Heart right ventricle (tissue), 16 donors: ENCODE measurements at regions of chr21 and their contacts with region 1.

Region 1: GRCh38 chr21:24153137-24153536 is 1454.1 kb downstream of the MRPL39 start:
- DNase-seq: no peak
- ATAC-seq: no peak
- H3K4me3 ChIP-seq: no peak overlapping the region
- H3K27ac ChIP-seq: no peak overlapping the region
- H3K4me1 ChIP-seq: no peaks in the 10 kb centered on the region
- H3K27me3 ChIP-seq: no peaks in the 10 kb centered on the region
- CTCF ChIP-seq: no peak

Region 2: DNA sequence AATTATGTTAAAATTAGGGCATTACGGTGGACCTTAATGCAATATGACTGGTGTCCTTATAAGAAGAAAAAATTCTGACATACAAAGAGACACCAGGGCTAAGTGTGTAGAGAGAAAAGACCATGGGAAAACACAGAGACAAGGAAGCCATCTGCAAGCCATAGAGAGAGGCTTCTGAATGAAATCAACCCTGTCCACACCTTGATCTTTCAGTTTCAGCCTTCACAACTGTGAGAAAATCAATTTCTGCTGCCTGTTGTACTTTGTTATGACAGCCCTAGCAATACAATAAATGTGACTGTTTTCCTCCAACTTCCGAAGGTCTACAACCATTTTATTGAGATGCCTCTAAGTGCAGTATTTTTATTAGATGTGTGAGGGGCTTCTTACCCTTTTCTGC is 46.9 kb after region 1 on chr21:
- intact Hi-C with region 1: loop called in 1 of 10 experiments (anchors 10 kb)
- DNase-seq: no peak
- ATAC-seq: no peak
- H3K4me3 ChIP-seq: no peak overlapping the region
- H3K27ac ChIP-seq: no peak overlapping the region
- H3K4me1 ChIP-seq: no peaks in the 10 kb centered on the region
- H3K27me3 ChIP-seq: no peaks in the 10 kb centered on the region
- CTCF ChIP-seq: no peak